ENCODE measurements at regions of chr10 and their contacts with region 1.

Region 1: DNA sequence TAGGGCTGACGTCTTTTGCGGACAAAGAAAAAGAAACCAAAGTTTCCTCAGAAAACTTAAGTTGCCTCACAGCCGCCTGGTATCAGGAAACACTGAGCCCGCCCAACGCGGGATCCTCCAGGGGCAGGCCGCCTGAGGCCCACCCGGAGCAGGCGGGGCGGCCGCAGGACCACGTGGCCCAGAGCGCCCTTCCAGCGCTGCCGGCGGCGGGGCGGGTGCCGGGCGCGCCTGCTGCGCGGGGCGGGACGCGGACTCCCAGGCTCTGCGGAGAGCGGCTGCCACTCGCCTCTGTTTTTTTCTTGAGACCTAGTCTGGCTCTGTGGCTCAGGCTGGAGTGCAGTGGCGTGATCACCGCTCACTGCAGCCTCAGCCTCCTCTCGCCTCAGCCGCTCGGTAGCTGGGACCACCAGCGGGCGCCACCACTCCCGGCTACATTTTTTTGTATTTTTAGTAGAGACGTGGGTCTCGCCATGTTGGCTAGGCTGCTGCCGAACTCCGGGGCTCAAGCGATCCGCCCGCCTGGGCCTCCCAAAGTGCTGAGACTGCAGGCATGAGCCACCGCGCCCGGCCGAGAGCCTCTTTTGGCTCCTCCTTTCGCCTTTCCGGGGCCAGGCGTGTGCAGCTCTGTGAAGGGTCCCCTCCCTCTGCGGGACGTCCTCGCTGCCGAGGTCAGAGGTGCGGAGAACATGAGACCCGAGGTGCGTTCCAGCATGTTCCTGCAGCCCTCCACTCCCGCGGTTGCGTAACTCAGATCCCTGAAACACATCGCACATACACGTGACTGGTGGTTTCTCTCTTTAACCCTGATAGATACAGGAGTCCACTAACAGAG is 11.6 kb upstream of the HNRNPF start:
- DNase-seq: peak; percentile 64 to 96 (median 86)
- ATAC-seq: peak; percentile 87
- H3K4me3 ChIP-seq: peak overlapping the region; percentile 65 to 92
- H3K4me3 Mint-ChIP-seq: peak overlapping the region; percentile 93
- H3K27ac ChIP-seq: peak overlapping the region; percentile 82 to 83
- H3K27ac Mint-ChIP-seq: peak overlapping the region; percentile 98
- H3K4me1 ChIP-seq: peaks cover 40% of the 10 kb centered on the region
- H3K4me1 Mint-ChIP-seq: peaks cover 33% of the 10 kb centered on the region
- H3K27me3 ChIP-seq: no peaks in the 10 kb centered on the region
- H3K27me3 Mint-ChIP-seq: no peaks in the 10 kb centered on the region
- CTCF ChIP-seq: no peak

Region 2: GRCh38 chr10:43396928-43397624 is 23.5 kb before region 1 on chr10:
- CTCF ChIA-PET with region 1: interaction called, 6 read pairs
- POLR2A ChIA-PET with region 1: interaction called, 8 read pairs
- intact Hi-C with region 1: loop called in 1 of 2 experiments (anchors 2 kb)
- DNase-seq: peak; percentile 44 to 89 (median 73)
- ATAC-seq: peak; percentile 51
- H3K4me3 ChIP-seq: peak overlapping the region; percentile 64 to 71
- H3K4me3 Mint-ChIP-seq: peak overlapping the region; percentile 94
- H3K27ac ChIP-seq: peak overlapping the region; percentile 66 to 89
- H3K27ac Mint-ChIP-seq: peak overlapping the region; percentile 93
- H3K4me1 ChIP-seq: peaks cover 71% of the 10 kb centered on the region
- H3K4me1 Mint-ChIP-seq: peaks cover 80% of the 10 kb centered on the region
- H3K27me3 ChIP-seq: no peaks in the 10 kb centered on the region
- H3K27me3 Mint-ChIP-seq: no peaks in the 10 kb centered on the region
- CTCF ChIP-seq: no peak

Measured in CD8-positive, alpha-beta T cell (primary cell).